ENCODE measurements at regions of chr1 and their contacts with region 1.

Region 1: DNA sequence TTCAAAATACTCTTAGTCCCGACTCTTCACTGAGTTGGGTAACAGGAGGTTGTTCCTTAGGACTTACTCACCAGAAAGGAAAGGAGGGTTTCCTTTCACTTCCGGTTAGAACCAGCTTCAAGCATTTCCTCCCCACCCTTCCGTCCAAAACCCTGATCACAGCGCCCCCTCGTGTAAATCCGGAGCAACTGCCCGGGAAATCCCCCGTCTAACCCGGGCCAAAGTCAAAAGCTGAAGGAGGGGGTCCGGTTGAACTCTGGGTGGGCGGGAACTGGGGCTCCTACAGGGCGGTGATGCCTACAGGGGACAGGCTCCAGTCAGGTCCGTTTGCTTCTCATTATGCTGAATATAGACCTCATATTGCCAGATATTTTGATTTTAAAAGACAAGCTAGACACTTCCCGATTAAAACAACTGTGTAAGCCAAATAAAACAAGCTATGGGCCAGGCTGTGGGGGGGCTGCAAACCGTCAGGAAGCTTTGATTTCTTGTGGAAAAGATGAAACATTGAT is 15.0 kb upstream of the MTARC2 start:
- DNase-seq: peak; percentile 78 to 87 (median 82)
- ATAC-seq: peak; percentile 89 to 92 (median 91)
- H3K4me3 ChIP-seq: peak overlapping the region; percentile 21 to 43 (median 26)
- H3K27ac ChIP-seq: peak overlapping the region; percentile 56 to 71 (median 64)
- H3K4me1 ChIP-seq: peaks cover 0 to 17% (median 5%) of the 10 kb centered on the region in 4 donors
- H3K27me3 ChIP-seq: no peaks in the 10 kb centered on the region
- CTCF ChIP-seq: peak; percentile 85 to 89 (median 88)
- POLR2A ChIP-seq: no peak

Region 2: GRCh38 chr1:220690140-220691025 is 42.8 kb before region 1 on chr1 and contains the start of gene C1orf115:
- intact Hi-C with region 1: loop called (anchors 5 to 10 kb)
- DNase-seq: peak; percentile 86 to 90 (median 89)
- ATAC-seq: peak; percentile 91 to 96 (median 95)
- H3K4me3 ChIP-seq: peak within 1 kb of the TSS; percentile 65 to 88 (median 81)
- H3K27ac ChIP-seq: peak within 1 kb of the TSS; percentile 78 to 88 (median 87)
- H3K4me1 ChIP-seq: peaks cover 0 to 10% (median 0%) of the 10 kb centered on the region in 4 donors
- H3K27me3 ChIP-seq: no peaks in the 10 kb centered on the region
- CTCF ChIP-seq: peak; percentile 98 to 99 (median 99)
- POLR2A ChIP-seq: peak; percentile 82
- total RNA-seq, gene C1orf115: 45.2 to 65.9 (median 50.8) TPM

Measured in right lobe of liver (tissue), 6 donors.